Naive thymus-derived CD4-positive, alpha-beta T cell (primary cell): ENCODE measurements at regions of chr10 and their contacts with region 1.

Region 1: GRCh38 chr10:113385021-113385999 is 167.5 kb upstream of the HABP2 start:
- DNase-seq: peak; percentile 25 to 72 (median 61)
- ATAC-seq: peak; percentile 94
- H3K4me3 ChIP-seq: no peak overlapping the region
- H3K4me3 Mint-ChIP-seq: peak overlapping the region in 9 of 10 donors; percentile 8 to 69 (median 65)
- H3K27ac ChIP-seq: no peak overlapping the region
- H3K27ac Mint-ChIP-seq: peak overlapping the region in 4 of 9 donors; percentile 12 to 81 (median 56)
- H3K4me1 ChIP-seq: peaks cover 4 to 12% of the 10 kb centered on the region in 2 donors
- H3K4me1 Mint-ChIP-seq: peaks cover 14 to 37% (median 28%) of the 10 kb centered on the region in 7 donors
- H3K27me3 ChIP-seq: no peaks in the 10 kb centered on the region
- H3K27me3 Mint-ChIP-seq: peaks cover 0 to 49% (median 0%) of the 10 kb centered on the region in 5 donors

Region 2: GRCh38 chr10:112183329-112184051 is 1201.8 kb before region 1 on chr10 and contains the start of gene GPAM:
- CTCF ChIA-PET with region 1: no interaction called
- POLR2A ChIA-PET with region 1: no interaction called
- intact Hi-C with region 1: loop called in 1 of 2 experiments (anchors 5 kb)
- DNase-seq: peak; percentile 93 to 100 (median 97)
- ATAC-seq: peak; percentile 100
- H3K4me3 ChIP-seq: peak within 1 kb of the TSS; percentile 88
- H3K4me3 Mint-ChIP-seq: peak within 1 kb of the TSS; percentile 87 to 98 (median 92)
- H3K27ac ChIP-seq: peak within 1 kb of the TSS; percentile 75
- H3K27ac Mint-ChIP-seq: peak within 1 kb of the TSS; percentile 84 to 99 (median 94)
- H3K4me1 ChIP-seq: peaks cover 7 to 8% of the 10 kb centered on the region in 2 donors
- H3K4me1 Mint-ChIP-seq: peaks cover 13 to 34% (median 27%) of the 10 kb centered on the region in 7 donors
- H3K27me3 ChIP-seq: no peaks in the 10 kb centered on the region
- H3K27me3 Mint-ChIP-seq: peaks cover 0 to 11% (median 0%) of the 10 kb centered on the region in 5 donors
- total RNA-seq, gene GPAM: 3.7 to 11.3 (median 6.6) TPM

Region 3: GRCh38 chr10:112375721-112376395 is 1009.5 kb before region 1 on chr10:
- CTCF ChIA-PET with region 1: no interaction called
- POLR2A ChIA-PET with region 1: no interaction called
- intact Hi-C with region 1: loop called in 1 of 2 experiments (anchors 1 kb)
- DNase-seq: peak; percentile 33 to 70 (median 59)
- ATAC-seq: peak; percentile 87
- H3K4me3 ChIP-seq: peak overlapping the region; percentile 89
- H3K4me3 Mint-ChIP-seq: peak overlapping the region; percentile 95 to 100 (median 100)
- H3K27ac ChIP-seq: peak overlapping the region; percentile 95
- H3K27ac Mint-ChIP-seq: peak overlapping the region; percentile 97 to 100 (median 99)
- H3K4me1 ChIP-seq: peaks cover 11 to 21% of the 10 kb centered on the region in 2 donors
- H3K4me1 Mint-ChIP-seq: peaks cover 36 to 72% (median 61%) of the 10 kb centered on the region in 7 donors
- H3K27me3 ChIP-seq: no peaks in the 10 kb centered on the region
- H3K27me3 Mint-ChIP-seq: no peaks in the 10 kb centered on the region

Region 4: DNA sequence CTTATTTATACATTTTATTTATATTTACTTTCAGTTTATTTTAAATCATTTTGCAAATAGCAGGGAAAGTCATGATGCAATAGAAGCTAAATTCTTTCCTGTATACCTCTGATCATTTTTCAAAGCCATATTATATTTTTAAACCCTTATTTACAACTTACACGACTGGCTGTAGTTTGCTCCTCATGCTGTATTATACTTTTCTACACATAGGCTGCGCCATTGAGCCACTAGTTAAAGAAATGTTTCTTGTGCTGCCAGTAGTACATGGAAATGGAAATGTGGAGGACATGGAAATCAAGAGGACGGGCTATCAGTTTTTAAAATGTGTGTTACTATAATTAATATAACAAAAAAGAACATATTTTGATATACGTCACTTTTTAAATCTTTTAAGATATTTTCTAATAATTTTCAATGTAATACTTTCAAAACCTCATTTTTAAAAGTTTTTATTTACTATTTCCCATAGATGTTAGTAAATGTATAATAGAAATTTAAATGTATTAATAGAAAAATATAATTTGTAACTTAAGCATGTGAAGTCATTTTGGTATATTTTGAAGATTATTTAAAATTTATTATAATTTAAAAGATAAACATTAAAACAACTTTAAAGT is 819.8 kb before region 1 on chr10:
- CTCF ChIA-PET with region 1: no interaction called
- POLR2A ChIA-PET with region 1: no interaction called
- intact Hi-C with region 1: loop called (anchors 5 to 10 kb)
- DNase-seq: peak in 1 of 9 donors; percentile 2
- ATAC-seq: no peak
- H3K4me3 ChIP-seq: no peak overlapping the region
- H3K4me3 Mint-ChIP-seq: no peak overlapping the region
- H3K27ac ChIP-seq: no peak overlapping the region
- H3K27ac Mint-ChIP-seq: no peak overlapping the region
- H3K4me1 ChIP-seq: no peaks in the 10 kb centered on the region
- H3K4me1 Mint-ChIP-seq: no peaks in the 10 kb centered on the region
- H3K27me3 ChIP-seq: no peaks in the 10 kb centered on the region
- H3K27me3 Mint-ChIP-seq: no peaks in the 10 kb centered on the region

Region 5: DNA sequence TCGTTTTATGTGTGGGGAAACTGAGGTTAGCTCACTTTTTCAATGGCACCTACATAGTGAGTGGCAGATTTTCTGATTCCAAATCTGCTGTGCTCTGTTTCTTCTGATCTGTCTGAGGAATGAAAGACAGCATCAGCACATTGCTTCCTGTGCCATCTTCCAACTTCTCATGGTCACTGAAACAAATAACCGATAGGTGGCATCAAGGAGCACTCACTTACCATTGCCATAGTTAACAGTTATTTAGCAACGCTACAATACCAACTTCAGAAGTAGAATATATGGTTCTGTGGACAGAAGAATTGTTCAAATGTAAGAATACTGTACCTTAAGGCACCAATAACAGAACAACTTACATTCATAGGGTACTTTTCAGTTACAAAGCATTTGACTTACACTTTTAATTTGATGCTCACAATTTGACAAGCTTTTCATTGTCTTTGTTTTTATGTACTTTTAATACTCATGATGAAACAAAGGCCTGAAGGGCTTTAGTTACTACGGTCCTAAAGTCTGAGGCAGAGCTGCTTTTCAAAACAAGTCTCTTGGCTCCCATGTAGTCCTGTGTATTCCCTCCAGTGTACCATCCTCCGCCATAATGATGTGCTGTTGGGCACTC is 664.1 kb before region 1 on chr10:
- CTCF ChIA-PET with region 1: interaction called, 5 read pairs
- POLR2A ChIA-PET with region 1: no interaction called
- intact Hi-C with region 1: loop called in 1 of 2 experiments (anchors 1 kb)
- DNase-seq: peak in 5 of 9 donors; percentile 7 to 42 (median 21)
- ATAC-seq: no peak
- H3K4me3 ChIP-seq: no peak overlapping the region
- H3K4me3 Mint-ChIP-seq: no peak overlapping the region
- H3K27ac ChIP-seq: no peak overlapping the region
- H3K27ac Mint-ChIP-seq: no peak overlapping the region
- H3K4me1 ChIP-seq: no peaks in the 10 kb centered on the region
- H3K4me1 Mint-ChIP-seq: peaks cover 0 to 4% (median 0%) of the 10 kb centered on the region in 7 donors
- H3K27me3 ChIP-seq: no peaks in the 10 kb centered on the region
- H3K27me3 Mint-ChIP-seq: no peaks in the 10 kb centered on the region

Region 6: DNA sequence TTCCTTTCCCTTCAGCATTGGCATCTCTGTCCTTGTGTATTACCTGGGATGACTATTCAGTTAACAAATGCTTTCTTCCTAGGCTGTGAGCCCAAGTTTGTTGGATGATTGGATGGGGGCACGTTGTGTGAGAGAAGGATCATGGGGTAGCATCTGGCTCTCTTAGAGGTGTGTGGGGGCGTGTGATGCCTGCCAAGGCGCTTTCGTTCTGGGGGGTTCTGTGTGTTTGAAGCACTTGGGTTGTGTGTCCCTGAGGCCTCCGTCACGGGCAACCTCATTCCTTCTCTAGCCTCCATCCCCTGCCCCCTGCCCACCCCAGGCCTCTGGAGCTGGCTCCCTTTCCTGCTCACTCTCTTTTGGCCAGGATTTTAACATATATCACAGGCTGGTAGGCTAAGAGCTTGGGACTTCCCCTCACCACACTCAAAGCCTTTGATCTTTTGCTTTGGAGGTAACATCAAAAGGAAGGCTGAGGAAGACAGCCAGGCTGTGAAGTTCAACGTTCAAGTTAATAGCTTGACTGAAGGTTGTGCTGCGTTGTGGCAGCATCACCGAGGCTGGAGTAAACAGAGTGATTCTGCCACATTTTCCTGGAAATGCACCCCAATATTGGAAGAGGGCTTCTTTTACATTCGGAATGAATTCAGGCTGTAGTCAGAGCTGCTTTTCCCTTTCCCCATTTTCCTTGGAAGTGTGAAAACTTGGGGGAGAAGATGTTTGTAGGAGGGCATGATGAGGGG is 378.1 kb before region 1 on chr10:
- CTCF ChIA-PET with region 1: no interaction called
- POLR2A ChIA-PET with region 1: no interaction called
- intact Hi-C with region 1: loop called in 1 of 2 experiments (anchors 2 kb)
- DNase-seq: peak in 8 of 9 donors; percentile 21 to 82 (median 72)
- ATAC-seq: peak; percentile 93
- H3K4me3 ChIP-seq: peak overlapping the region; percentile 44
- H3K4me3 Mint-ChIP-seq: peak overlapping the region; percentile 63 to 89 (median 80)
- H3K27ac ChIP-seq: no peak overlapping the region
- H3K27ac Mint-ChIP-seq: peak overlapping the region in 5 of 9 donors; percentile 17 to 81 (median 41)
- H3K4me1 ChIP-seq: peaks cover 25 to 34% of the 10 kb centered on the region in 2 donors
- H3K4me1 Mint-ChIP-seq: peaks cover 15 to 38% (median 29%) of the 10 kb centered on the region in 7 donors
- H3K27me3 ChIP-seq: peaks cover 0 to 6% of the 10 kb centered on the region in 2 donors
- H3K27me3 Mint-ChIP-seq: peaks cover 32 to 85% (median 56%) of the 10 kb centered on the region in 5 donors

Region 7: DNA sequence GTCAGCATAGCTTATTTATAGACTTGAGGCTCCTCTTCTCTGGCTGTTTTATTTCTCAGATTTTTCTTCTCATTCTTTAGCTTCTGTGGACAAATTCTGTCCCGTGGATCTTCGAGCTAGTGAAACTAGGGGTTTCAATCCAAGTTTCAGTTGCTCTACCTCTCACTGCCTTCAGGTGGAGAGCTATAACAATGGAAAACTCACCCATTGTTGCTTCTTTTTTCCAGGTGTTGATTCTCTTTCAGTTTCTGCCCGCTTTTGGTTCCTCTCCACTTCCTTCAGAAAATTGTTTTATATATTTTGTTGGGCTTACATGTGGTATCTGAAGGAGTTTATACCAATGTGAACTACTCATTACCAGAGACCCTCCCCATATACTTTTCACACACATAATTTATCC is 169.2 kb before region 1 on chr10:
- CTCF ChIA-PET with region 1: no interaction called
- POLR2A ChIA-PET with region 1: no interaction called
- intact Hi-C with region 1: loop called in 1 of 2 experiments (anchors 10 kb)
- DNase-seq: no peak
- ATAC-seq: no peak
- H3K4me3 ChIP-seq: no peak overlapping the region
- H3K4me3 Mint-ChIP-seq: no peak overlapping the region
- H3K27ac ChIP-seq: no peak overlapping the region
- H3K27ac Mint-ChIP-seq: no peak overlapping the region
- H3K4me1 ChIP-seq: no peaks in the 10 kb centered on the region
- H3K4me1 Mint-ChIP-seq: no peaks in the 10 kb centered on the region
- H3K27me3 ChIP-seq: no peaks in the 10 kb centered on the region
- H3K27me3 Mint-ChIP-seq: peaks cover 1 to 12% (median 10%) of the 10 kb centered on the region in 5 donors